HAP-1 (cell line): ENCODE measurements at regions of chr21 and their contacts with region 1.

Region 1: GRCh38 chr21:36141513-36141925 is 6.6 kb downstream of the CBR3 start:
- DNase-seq: peak; percentile 83 to 89
- H3K4me3 ChIP-seq: no peak overlapping the region
- H3K4me1 ChIP-seq: peaks cover 6% of the 10 kb centered on the region
- H3K27me3 ChIP-seq: no peaks in the 10 kb centered on the region

Region 2: DNA sequence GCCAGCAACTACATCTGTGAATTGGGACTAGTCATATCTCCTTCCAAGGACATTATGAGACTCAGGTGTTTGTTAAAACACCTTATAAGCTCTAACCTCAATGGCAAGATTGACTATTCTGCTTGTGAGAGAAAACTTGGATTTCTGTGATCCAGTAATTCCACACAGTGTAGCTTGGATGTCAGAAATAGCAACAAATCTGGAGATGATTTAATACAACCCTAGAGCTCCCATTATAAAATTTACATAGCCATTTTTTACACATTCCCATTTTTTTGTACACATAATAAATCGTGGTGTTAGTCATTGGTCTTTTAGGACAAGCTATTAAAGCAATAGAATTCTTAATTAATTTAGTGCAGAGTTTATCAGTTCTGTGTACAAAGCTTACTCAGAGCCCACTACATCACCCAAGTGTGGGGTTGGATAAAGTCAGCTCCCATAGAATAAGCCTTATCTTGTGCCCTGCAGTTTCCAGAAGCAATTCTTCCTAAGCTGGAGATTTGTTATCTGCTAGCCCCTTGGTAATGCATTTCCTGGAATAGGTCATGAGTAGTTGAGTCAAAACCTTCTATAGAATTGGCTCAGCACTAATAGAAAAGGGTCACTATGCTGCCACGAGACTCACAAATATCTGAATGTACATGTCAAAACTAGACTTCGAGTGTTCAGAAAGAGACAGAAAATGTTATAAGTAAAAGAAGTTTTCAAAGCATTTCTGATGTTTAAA is 658.4 kb before region 1 on chr21:
- in situ Hi-C with region 1: no loop called
- DNase-seq: no peak
- H3K4me3 ChIP-seq: no peak overlapping the region
- H3K4me1 ChIP-seq: no peaks in the 10 kb centered on the region
- H3K27me3 ChIP-seq: no peaks in the 10 kb centered on the region

Region 3: DNA sequence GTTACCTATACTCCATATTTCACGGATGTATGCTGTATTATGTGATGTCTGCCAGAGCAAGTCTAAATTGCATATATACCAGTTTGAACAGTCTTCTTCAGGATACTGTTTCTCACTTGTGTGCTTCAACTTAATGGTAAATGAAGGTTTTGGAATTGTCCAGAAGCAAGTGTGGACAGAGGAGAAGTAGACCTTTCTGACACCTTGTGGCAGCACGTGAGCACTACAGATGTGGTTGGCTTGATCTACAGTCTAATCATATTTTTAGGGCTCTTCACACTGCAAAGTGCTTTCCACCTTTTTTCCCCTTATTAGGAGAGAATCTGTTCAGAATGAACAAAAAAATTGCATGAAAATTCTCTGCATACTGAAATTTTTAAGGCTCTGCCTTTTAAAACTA is 189.4 kb after region 1 on chr21:
- in situ Hi-C with region 1: loop called (anchors 5 kb)
- DNase-seq: peak; percentile 52 to 64
- H3K4me3 ChIP-seq: no peak overlapping the region
- H3K4me1 ChIP-seq: no peaks in the 10 kb centered on the region; the same call in 1 of the 2 replicates
- H3K27me3 ChIP-seq: no peaks in the 10 kb centered on the region